ENCODE measurements at regions of chr16 and their contacts with region 1.

Region 1: GRCh38 chr16:11396241-11397048 is 51.2 kb downstream of the RMI2 start:
- DNase-seq: peak; percentile 75
- ATAC-seq: peak; percentile 83 to 84

Region 2: GRCh38 chr16:11715246-11715947 is 319.0 kb after region 1 on chr16:
- intact Hi-C with region 1: loop called (anchors 2 to 5 kb)
- DNase-seq: no peak
- ATAC-seq: no peak

Region 3: DNA sequence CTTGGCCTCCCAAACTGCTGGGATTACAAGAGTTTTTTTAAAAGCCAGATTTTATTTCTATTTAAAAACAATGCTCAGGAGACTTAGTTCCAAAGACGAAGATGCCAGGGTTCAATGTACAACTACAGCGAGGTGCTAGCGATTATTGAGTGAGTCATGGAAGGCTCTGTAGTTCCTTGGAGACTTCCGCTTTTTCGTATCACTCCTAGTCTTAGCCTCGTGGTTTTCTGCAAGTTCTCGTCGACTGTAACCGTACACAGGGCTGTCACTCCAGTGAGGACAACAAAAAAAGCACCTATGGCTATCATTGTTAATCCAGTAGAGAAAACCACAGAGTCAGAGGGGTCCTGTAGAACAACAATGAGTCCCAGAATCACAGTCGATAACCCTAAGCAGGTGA is 423.4 kb after region 1 on chr16:
- intact Hi-C with region 1: loop called in 1 of 2 experiments (anchors 10 kb)
- DNase-seq: no peak
- ATAC-seq: no peak

Region 4: DNA sequence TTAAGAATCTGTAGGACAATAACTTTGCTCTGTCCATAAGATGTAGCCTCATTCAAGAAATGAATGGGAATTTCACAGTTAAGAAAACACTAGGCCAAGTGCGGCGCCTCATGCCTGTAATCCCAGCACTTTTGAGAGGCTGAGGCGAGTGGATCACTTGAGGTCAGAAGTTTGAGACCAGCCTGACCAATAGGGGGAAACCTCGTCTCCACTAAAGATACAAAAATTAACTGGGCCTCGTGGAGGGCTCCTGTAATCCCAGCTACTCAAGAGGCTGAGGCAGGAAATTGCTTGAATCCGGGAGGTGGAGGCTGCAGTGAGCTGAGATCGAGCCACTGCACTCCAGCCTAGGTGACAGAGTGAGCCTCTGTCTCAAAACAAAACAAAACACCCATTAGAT is 474.7 kb after region 1 on chr16:
- intact Hi-C with region 1: loop called in 1 of 2 experiments (anchors 10 kb)
- DNase-seq: no peak
- ATAC-seq: peak; percentile 15 to 62

Measured in left cardiac atrium (tissue), 4 donors.